HepG2 (cell line): ENCODE measurements at regions of chr11 and their contacts with region 1.

Region 1: DNA sequence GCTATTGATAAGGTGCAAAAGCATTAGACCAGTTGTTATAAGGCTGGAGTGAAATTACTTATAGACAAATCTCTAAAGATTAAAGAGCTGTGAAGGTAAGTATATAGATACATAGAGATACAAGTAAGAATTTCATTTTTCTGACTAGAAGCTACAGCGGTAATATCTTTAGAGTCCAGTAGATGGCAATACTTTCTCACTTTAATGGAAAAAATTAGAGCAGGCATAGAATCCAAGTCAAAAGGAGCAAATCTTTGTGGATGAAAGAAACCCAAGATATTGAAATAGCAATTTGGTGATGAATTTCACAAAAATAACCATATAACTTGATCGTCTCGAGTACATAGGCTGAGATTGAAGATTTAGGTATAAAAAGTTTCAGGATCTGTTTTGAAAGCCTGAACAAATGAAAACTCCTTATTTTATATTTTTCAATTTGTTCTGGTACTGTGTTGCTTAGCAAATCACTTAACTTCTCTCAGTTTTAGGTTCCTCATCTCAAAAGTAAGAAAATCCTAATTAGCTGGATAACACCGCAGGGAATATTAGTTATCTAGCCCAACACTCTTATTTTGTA is 81.9 kb downstream of the UVRAG start:
- DNase-seq: peak; percentile 35
- ATAC-seq: no peak
- H3K4me3 ChIP-seq: no peak overlapping the region
- H3K27ac ChIP-seq: no peak overlapping the region
- H3K4me1 ChIP-seq: no peaks in the 10 kb centered on the region
- H3K27me3 ChIP-seq: no peaks in the 10 kb centered on the region
- CTCF ChIP-seq: peak; percentile 62
- EP300 ChIP-seq: no peak
- POLR2A ChIP-seq: no peak
- RAD21 ChIP-seq: peak; percentile 31; the same call in 1 of the 2 replicates

Region 2: DNA sequence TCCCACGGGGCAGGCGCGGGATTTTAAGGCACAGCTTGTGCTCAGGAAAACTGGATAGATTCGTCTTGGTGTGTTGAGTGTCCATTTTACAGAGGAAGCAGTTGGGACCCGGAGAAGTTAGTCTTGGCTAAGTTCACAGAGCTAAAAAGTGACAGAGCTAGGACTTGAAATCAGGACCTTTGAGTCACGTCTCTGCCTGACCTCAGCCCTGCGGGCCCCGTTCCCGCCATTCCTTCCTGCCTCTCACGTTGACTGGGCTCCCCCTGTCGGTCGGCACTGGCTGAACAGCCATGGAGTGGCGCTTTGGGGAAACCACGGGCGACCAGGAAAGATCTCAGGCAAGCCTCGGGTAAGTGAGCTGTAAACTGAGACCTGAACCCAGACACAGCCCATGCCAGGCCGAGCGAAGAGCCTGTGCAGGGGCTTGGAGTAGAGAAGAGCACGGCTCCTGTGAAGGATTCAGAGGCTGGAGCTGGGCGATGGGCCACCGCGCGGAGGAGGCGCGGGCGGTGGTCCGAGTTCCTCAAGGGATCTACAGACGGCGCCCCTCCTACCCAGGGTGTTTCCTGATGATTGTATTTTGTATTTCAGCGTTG is 255.3 kb after region 1 on chr11:
- CTCF ChIA-PET with region 1: interaction called, 14 read pairs
- POLR2A ChIA-PET with region 1: no interaction called
- in situ Hi-C with region 1: loop called (anchors 5 kb)
- intact Hi-C with region 1: loop called (anchors 1 kb)
- DNase-seq: peak; percentile 70
- ATAC-seq: peak; percentile 57
- H3K4me3 ChIP-seq: peak overlapping the region; percentile 28 to 68 (median 46); a peak in 5 of 6 replicates
- H3K27ac ChIP-seq: no peak overlapping the region
- H3K4me1 ChIP-seq: peaks cover 94% of the 10 kb centered on the region
- H3K27me3 ChIP-seq: no peaks in the 10 kb centered on the region
- CTCF ChIP-seq: peak; percentile 98
- EP300 ChIP-seq: no peak
- POLR2A ChIP-seq: no peak
- RAD21 ChIP-seq: peak; percentile 83

Region 3: GRCh38 chr11:76200006-76200940 is 303.3 kb after region 1 on chr11:
- CTCF ChIA-PET with region 1: no interaction called
- POLR2A ChIA-PET with region 1: no interaction called
- in situ Hi-C with region 1: loop called (anchors 5 kb)
- intact Hi-C with region 1: no loop called
- DNase-seq: no peak
- ATAC-seq: no peak
- H3K4me3 ChIP-seq: no peak overlapping the region
- H3K27ac ChIP-seq: no peak overlapping the region
- H3K4me1 ChIP-seq: peaks cover 18% of the 10 kb centered on the region; the same call in 1 of the 2 replicates
- H3K27me3 ChIP-seq: no peaks in the 10 kb centered on the region; a peak in 1 of 5 replicates
- CTCF ChIP-seq: no peak
- EP300 ChIP-seq: no peak
- POLR2A ChIP-seq: no peak
- RAD21 ChIP-seq: no peak

Region 4: GRCh38 chr11:76207642-76208401 is 310.9 kb after region 1 on chr11:
- CTCF ChIA-PET with region 1: interaction called, 5 read pairs
- POLR2A ChIA-PET with region 1: no interaction called
- in situ Hi-C with region 1: loop called (anchors 5 kb)
- intact Hi-C with region 1: loop called (anchors 2 kb)
- DNase-seq: peak; percentile 42
- ATAC-seq: peak; percentile 53
- H3K4me3 ChIP-seq: peak overlapping the region; percentile 61 to 75 (median 70)
- H3K27ac ChIP-seq: no peak overlapping the region
- H3K4me1 ChIP-seq: peaks cover 42% of the 10 kb centered on the region
- H3K27me3 ChIP-seq: peaks cover 14 to 27% of the 10 kb centered on the region in 2 experiments
- CTCF ChIP-seq: peak; percentile 85
- EP300 ChIP-seq: no peak
- POLR2A ChIP-seq: no peak
- RAD21 ChIP-seq: peak; percentile 95

Region 5: GRCh38 chr11:76235233-76236091 is 338.5 kb after region 1 on chr11:
- CTCF ChIA-PET with region 1: no interaction called
- POLR2A ChIA-PET with region 1: no interaction called
- in situ Hi-C with region 1: no loop called
- intact Hi-C with region 1: loop called (anchors 10 kb)
- DNase-seq: peak; percentile 86
- ATAC-seq: peak; percentile 78
- H3K4me3 ChIP-seq: peak overlapping the region; percentile 82 to 90 (median 88)
- H3K27ac ChIP-seq: peak overlapping the region; percentile 48
- H3K4me1 ChIP-seq: peaks cover 69% of the 10 kb centered on the region
- H3K27me3 ChIP-seq: peaks cover 1 to 9% of the 10 kb centered on the region in 2 experiments; a peak in 3 of 5 replicates
- CTCF ChIP-seq: no peak; the same call in 1 of the 2 replicates
- EP300 ChIP-seq: no peak
- POLR2A ChIP-seq: peak; percentile 62 to 63; a peak in 3 of 4 replicates
- RAD21 ChIP-seq: no peak

Region 6: DNA sequence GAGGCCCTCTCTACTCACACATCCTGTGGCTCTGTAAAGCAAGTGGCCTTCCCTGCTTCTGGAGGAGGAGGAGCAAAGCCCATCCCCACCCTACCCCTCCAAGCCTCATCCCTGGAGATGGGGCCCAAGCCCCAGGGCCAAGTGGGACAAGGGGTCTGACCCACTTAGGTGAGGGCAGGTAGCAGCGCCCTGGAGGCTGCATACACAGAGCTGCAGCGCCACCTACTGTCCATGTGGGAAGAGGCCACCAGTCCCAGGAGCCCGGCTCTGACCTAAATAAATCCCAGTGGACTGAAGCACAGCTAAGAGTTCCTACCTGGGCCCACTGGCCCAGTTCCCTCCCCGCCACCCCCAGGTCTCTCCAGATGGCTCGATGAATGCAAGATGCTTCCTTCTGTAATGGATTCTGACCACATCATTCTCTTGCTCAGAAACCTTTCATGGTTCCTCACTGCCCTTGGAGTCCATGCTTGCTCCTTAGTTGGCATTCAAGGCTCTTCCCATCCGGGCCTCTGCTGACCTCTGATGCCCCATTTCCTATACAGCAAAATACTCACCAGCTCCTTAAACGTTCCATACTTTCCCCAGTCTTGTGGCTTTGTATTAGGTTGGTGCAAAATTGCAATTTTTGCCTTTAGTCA is 421.9 kb after region 1 on chr11:
- CTCF ChIA-PET with region 1: interaction called, 11 read pairs
- POLR2A ChIA-PET with region 1: no interaction called
- in situ Hi-C with region 1: loop called (anchors 5 kb)
- intact Hi-C with region 1: no loop called
- DNase-seq: peak; percentile 64
- ATAC-seq: peak; percentile 92
- H3K4me3 ChIP-seq: no peak overlapping the region
- H3K27ac ChIP-seq: no peak overlapping the region
- H3K4me1 ChIP-seq: peaks cover 13% of the 10 kb centered on the region
- H3K27me3 ChIP-seq: peaks cover 3 to 10% of the 10 kb centered on the region in 2 experiments; a peak in 3 of 5 replicates
- CTCF ChIP-seq: peak; percentile 97
- EP300 ChIP-seq: no peak
- POLR2A ChIP-seq: no peak
- RAD21 ChIP-seq: peak; percentile 96